ENCODE measurements at regions of chr11 and their contacts with region 1.

Region 1: GRCh38 chr11:117443266-117444195 is 115.9 kb downstream of the CEP164 start:
- DNase-seq: peak; percentile 49 to 82 (median 59)
- ATAC-seq: peak; percentile 84 to 97 (median 90)
- H3K4me3 ChIP-seq: peak overlapping the region in 4 of 12 donors; percentile 12 to 16 (median 12)
- H3K27ac ChIP-seq: no peak overlapping the region
- H3K4me1 ChIP-seq: peaks cover 0 to 15% (median 0%) of the 10 kb centered on the region in 12 donors
- H3K27me3 ChIP-seq: peaks cover 0 to 17% (median 0%) of the 10 kb centered on the region in 9 donors
- CTCF ChIP-seq: peak; percentile 33 to 72 (median 62)
- POLR2A ChIP-seq: no peak

Region 2: DNA sequence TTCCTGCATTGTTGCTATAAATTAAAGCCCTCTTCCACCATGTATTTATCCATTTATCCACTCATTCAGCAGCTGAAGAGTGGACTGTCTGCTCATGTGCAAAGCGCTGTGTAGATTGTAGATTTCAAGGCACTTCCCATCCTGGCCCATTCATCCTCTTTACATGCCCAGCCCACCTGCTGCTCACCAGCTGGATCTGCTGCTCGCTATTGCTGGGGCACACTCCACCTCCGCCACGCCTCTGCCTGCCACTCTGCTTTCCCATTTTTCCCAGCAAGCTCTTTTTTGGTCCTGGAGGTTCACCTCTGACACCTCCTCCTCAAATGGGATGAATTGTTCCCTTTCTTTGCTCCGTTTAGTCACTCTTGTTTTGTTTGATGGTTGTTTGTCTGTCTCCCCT is 67.6 kb before region 1 on chr11:
- intact Hi-C with region 1: no loop called
- DNase-seq: no peak
- ATAC-seq: no peak
- H3K4me3 ChIP-seq: no peak overlapping the region
- H3K27ac ChIP-seq: no peak overlapping the region
- H3K4me1 ChIP-seq: peaks cover 0 to 30% (median 12%) of the 10 kb centered on the region in 12 donors
- H3K27me3 ChIP-seq: no peaks in the 10 kb centered on the region
- CTCF ChIP-seq: no peak
- POLR2A ChIP-seq: no peak

Region 3: DNA sequence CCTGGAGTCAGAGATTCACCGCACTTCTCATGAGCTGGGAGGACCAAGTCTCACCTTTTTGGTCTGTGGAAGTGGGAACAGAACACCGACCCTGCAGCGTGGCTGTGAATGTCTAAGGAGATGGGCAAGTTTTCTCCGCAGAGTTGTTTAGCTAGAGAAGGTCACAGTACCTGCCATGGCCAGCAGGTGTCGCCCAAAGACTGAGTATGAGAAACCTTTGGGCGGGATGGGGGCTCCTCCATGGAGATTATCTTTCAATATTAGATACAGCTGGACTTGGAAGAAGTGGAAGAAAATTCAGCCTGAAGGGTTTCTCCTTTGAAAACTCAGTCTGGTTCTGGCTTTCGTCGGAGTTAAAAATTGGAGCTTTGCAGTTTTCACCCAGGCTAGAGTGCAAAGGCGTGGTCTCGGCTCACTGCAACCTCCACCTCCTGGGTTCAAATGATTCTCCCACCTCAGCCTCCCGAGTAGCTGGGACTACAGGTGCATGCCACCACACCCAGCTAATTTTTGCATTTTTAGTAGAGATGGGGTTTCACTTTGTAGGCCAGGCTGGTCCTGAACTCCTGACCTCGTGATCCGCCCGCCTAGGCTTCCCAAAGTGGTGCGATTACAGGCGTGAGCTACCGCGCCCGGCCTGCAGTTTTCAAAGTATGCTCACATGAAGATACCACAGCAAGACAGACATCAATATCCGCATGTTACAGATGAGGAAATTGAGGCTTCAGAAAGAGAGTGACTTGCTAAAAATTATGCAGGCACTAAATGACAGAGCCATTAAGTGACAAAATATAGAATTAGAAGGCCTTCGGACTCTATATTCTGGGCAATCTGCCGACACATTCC is 364.2 kb after region 1 on chr11:
- intact Hi-C with region 1: loop called in 6 of 10 experiments (anchors 1 to 5 kb)
- DNase-seq: peak; percentile 70 to 89 (median 79)
- ATAC-seq: peak; percentile 31 to 59 (median 45)
- H3K4me3 ChIP-seq: no peak overlapping the region
- H3K27ac ChIP-seq: no peak overlapping the region
- H3K4me1 ChIP-seq: peaks cover 0 to 23% (median 3%) of the 10 kb centered on the region in 12 donors
- H3K27me3 ChIP-seq: peaks cover 0 to 12% (median 0%) of the 10 kb centered on the region in 9 donors
- CTCF ChIP-seq: peak; percentile 84 to 96 (median 89)
- POLR2A ChIP-seq: no peak

Region 4: GRCh38 chr11:117817368-117818040 is 374.0 kb after region 1 on chr11:
- intact Hi-C with region 1: loop called in 4 of 10 experiments (anchors 5 kb)
- DNase-seq: peak; percentile 78 to 88 (median 80)
- ATAC-seq: peak; percentile 43 to 73 (median 67)
- H3K4me3 ChIP-seq: peak overlapping the region in 6 of 12 donors; percentile 7 to 47 (median 32)
- H3K27ac ChIP-seq: peak overlapping the region in 6 of 12 donors; percentile 28 to 75 (median 42)
- H3K4me1 ChIP-seq: peaks cover 0 to 60% (median 28%) of the 10 kb centered on the region in 12 donors
- H3K27me3 ChIP-seq: no peaks in the 10 kb centered on the region
- CTCF ChIP-seq: peak; percentile 97 to 100 (median 99)
- POLR2A ChIP-seq: no peak